ENCODE measurements at regions of chr19 and their contacts with region 1.

Region 1: DNA sequence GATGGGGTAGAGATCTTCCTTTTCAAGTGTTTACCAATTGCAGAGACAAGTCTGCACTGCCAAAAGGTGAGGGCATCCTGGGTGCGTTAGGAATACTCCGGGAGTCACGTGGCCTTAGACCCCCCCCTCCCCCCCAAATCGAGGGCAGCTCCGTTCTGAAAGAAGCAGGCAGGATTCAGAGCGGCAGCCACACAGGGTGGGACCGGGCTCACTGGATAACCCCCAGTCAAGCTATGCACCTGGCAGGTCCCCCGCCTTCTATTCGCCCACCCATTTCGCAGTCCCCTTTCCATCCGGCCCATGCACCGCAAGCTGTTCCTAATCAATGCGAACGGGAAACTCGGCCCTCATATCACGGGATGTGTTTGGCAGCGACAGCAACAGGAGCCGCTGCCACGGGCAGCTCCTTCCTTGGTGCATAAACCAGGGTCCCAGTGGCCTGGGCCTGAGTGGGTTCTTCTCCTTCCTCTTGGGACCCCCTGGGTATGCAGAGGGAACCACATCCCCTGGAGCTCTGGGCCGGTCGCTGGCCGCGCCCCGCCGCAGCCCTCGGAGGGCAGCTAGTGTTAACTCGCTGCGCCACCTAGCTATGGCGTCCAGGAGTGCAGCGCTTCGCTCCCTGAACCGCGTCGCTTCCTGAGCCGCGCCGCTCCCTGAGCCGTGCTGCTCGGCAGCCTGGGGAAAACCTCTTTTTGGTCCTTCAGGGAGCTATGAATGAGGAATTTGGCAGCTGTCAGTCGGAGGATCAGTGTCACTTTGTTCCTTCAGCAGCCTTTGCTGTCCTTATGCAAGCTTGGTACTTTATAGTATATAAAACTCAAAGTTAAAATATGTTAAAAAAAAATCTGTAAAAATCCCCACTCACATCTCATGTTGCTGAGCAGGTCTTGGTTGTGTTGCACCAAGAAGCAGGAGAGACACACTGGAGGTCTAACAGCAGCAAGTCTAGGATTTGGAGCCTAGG is 41.4 kb downstream of the LYL1 start:
- DNase-seq: peak; percentile 67
- H3K4me3 ChIP-seq: peak overlapping the region; percentile 20 to 23 (median 23)
- H3K27ac ChIP-seq: peak overlapping the region; percentile 77
- H3K4me1 ChIP-seq: peaks cover 35% of the 10 kb centered on the region
- H3K27me3 ChIP-seq: no peaks in the 10 kb centered on the region
- CTCF ChIP-seq: peak; percentile 84 to 97

Region 2: GRCh38 chr19:12884926-12885748 is 176.1 kb before region 1 on chr19:
- CTCF ChIA-PET with region 1: interaction called, 11 read pairs
- dilution Hi-C with region 1: no loop called
- in situ Hi-C with region 1: no loop called
- intact Hi-C with region 1: no loop called
- DNase-seq: peak; percentile 80
- H3K4me3 ChIP-seq: peak overlapping the region; percentile 19 to 47 (median 28)
- H3K27ac ChIP-seq: no peak overlapping the region
- H3K4me1 ChIP-seq: peaks cover 17% of the 10 kb centered on the region
- H3K27me3 ChIP-seq: no peaks in the 10 kb centered on the region
- CTCF ChIP-seq: peak; percentile 21 to 43

Region 3: GRCh38 chr19:12983542-12984142 is 77.6 kb before region 1 on chr19:
- CTCF ChIA-PET with region 1: interaction called, 6 read pairs
- dilution Hi-C with region 1: no loop called
- in situ Hi-C with region 1: loop called in 1 of 2 experiments (anchors 10 kb)
- intact Hi-C with region 1: loop called (anchors 1 kb)
- DNase-seq: peak; percentile 73
- H3K4me3 ChIP-seq: peak overlapping the region in 1 of 3 experiments; percentile 34
- H3K27ac ChIP-seq: peak overlapping the region; percentile 50
- H3K4me1 ChIP-seq: peaks cover 5% of the 10 kb centered on the region
- H3K27me3 ChIP-seq: no peaks in the 10 kb centered on the region
- CTCF ChIP-seq: peak; percentile 73 to 91

Region 4: DNA sequence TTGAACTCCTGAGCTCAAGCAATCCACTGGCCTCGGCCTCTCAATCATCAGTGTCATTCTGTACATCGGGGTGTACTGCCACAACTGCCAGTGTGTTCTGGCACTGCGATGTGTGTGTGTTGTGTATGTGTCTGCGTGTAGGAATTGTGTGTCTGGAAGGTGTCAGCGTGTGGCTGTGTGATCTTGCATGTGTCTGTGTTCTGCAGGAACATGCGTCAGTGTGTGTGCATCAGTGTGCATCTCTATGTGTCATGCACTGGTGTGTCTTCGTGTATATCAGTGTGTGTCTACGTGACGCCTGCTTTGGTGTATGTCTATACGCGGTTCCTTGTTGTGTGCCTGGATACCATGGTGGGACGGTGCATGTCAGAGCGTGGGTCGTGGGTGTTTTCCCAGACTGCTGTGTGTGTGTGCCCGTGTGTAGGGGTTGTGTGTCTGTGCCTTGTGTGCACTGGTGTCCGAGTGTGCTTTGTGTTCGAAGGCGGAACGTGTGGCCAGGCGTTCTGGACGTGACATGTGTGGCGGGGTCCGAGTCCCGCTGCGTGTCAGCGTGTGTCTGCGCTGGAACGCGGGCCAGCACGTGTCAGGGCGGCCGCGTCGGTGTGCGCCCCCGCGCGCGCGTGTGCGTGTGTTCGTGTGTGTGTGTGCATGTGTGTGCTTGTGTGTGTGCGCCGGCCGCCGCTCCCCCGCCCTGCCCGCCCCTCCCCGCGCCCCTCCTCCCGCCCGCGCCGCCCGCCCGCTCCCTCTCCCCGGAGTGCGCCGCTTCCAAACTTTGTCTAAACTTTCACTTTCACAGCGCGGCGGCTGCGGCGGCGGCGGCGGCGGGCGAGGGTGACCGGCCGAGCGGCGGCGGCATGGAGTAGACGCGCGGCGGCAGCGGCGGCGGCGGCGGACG is 66.3 kb before region 1 on chr19 and contains the start of gene NFIX:
- CTCF ChIA-PET with region 1: no interaction called
- dilution Hi-C with region 1: no loop called
- in situ Hi-C with region 1: no loop called
- intact Hi-C with region 1: no loop called
- DNase-seq: peak; percentile 62
- H3K4me3 ChIP-seq: peak within 1 kb of the TSS; percentile 55 to 97 (median 91)
- H3K27ac ChIP-seq: peak within 1 kb of the TSS; percentile 47
- H3K4me1 ChIP-seq: peaks cover 19% of the 10 kb centered on the region
- H3K27me3 ChIP-seq: no peaks in the 10 kb centered on the region
- CTCF ChIP-seq: no peak
- total RNA-seq, gene NFIX: 43.2 to 76.1 TPM

Region 5: GRCh38 chr19:13228561-13228960 is 167.3 kb after region 1 on chr19:
- CTCF ChIA-PET with region 1: no interaction called
- dilution Hi-C with region 1: no loop called
- in situ Hi-C with region 1: no loop called
- intact Hi-C with region 1: no loop called
- DNase-seq: no peak
- H3K4me3 ChIP-seq: no peak overlapping the region
- H3K27ac ChIP-seq: no peak overlapping the region
- H3K4me1 ChIP-seq: no peaks in the 10 kb centered on the region
- H3K27me3 ChIP-seq: no peaks in the 10 kb centered on the region
- CTCF ChIP-seq: no peak